B cell (primary cell): ENCODE measurements at regions of chr4 and their contacts with region 1.

Region 1: GRCh38 chr4:145690610-145691009 is 10.7 kb downstream of the C4orf51 start:
- DNase-seq: no peak
- ATAC-seq: no peak
- H3K4me3 ChIP-seq: no peak overlapping the region
- H3K4me3 Mint-ChIP-seq: no peak overlapping the region
- H3K27ac ChIP-seq: no peak overlapping the region
- H3K27ac Mint-ChIP-seq: no peak overlapping the region
- H3K4me1 ChIP-seq: no peaks in the 10 kb centered on the region
- H3K4me1 Mint-ChIP-seq: no peaks in the 10 kb centered on the region
- H3K27me3 ChIP-seq: no peaks in the 10 kb centered on the region
- H3K27me3 Mint-ChIP-seq: peaks cover 7% of the 10 kb centered on the region
- CTCF ChIP-seq: no peak

Region 2: DNA sequence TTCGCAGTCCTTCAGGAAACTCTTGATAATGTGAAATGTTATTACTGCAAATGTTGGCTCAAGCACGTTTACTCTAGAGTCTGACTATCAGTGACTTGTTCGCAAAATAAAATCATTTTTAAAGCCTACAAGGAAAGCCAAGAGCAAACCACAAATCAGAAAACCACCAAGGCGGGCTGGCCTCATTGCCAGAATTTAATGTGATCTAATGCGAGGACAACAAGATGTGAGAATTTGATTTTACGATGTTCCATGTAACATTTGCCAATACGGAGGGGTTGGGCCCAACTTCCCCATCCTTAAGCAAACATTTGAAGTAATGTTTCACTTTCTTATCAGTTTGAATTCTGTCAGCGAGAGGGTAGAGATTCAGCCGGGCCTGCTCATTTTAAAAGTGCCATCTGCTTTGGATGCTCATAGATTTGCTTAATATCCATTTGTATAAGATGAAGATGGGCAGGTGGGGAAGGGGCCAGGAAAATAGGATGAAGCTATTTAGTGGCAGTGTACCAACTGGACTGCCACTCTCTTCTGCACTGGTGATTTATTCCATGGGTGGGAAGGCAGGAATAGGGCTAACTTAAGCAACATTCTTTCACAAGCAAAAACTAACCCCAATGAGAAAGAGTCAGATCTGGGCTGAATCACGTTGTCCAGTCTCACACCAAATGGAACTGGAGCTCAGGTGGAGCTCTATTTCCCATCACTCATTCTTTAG is 817.9 kb before region 1 on chr4:
- CTCF ChIA-PET with region 1: no interaction called
- POLR2A ChIA-PET with region 1: no interaction called
- intact Hi-C with region 1: no loop called
- DNase-seq: no peak
- ATAC-seq: no peak
- H3K4me3 ChIP-seq: no peak overlapping the region
- H3K4me3 Mint-ChIP-seq: no peak overlapping the region
- H3K27ac ChIP-seq: no peak overlapping the region
- H3K27ac Mint-ChIP-seq: no peak overlapping the region
- H3K4me1 ChIP-seq: no peaks in the 10 kb centered on the region
- H3K4me1 Mint-ChIP-seq: no peaks in the 10 kb centered on the region
- H3K27me3 ChIP-seq: no peaks in the 10 kb centered on the region
- H3K27me3 Mint-ChIP-seq: no peaks in the 10 kb centered on the region
- CTCF ChIP-seq: no peak

Region 3: DNA sequence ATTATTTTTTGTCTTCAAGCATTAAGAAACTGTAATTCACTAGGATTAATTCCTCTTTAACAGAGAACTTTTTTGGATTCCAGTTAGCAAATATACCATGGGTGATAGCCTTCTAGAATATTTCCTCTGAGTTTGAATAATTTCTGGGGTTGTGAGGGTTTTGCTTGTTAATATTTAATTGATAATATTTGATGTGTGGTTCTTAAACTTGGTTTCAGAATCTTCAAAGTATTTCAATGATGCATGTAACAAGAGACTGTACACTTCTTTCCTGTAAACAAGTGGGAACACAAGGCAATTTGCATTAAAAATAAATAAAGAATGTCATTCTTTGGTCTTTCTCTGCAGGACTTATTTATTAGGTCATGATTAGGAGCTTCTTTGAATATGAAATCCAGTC is 20.2 kb before region 1 on chr4:
- CTCF ChIA-PET with region 1: interaction called, 10 read pairs
- POLR2A ChIA-PET with region 1: no interaction called
- intact Hi-C with region 1: no loop called
- DNase-seq: no peak
- ATAC-seq: no peak
- H3K4me3 ChIP-seq: no peak overlapping the region
- H3K4me3 Mint-ChIP-seq: no peak overlapping the region
- H3K27ac ChIP-seq: no peak overlapping the region
- H3K27ac Mint-ChIP-seq: no peak overlapping the region
- H3K4me1 ChIP-seq: no peaks in the 10 kb centered on the region
- H3K4me1 Mint-ChIP-seq: no peaks in the 10 kb centered on the region
- H3K27me3 ChIP-seq: no peaks in the 10 kb centered on the region
- H3K27me3 Mint-ChIP-seq: peaks cover 6% of the 10 kb centered on the region
- CTCF ChIP-seq: no peak